Posterior cingulate gyrus (tissue), 11 donors: ENCODE measurements at regions of chr19 and their contacts with region 1.

Region 1: GRCh38 chr19:10835754-10836477 is at the start of gene TMED1:
- DNase-seq: peak; percentile 95 to 100 (median 98)

Region 2: GRCh38 chr19:10870955-10871603 is 35.2 kb after region 1 on chr19 and contains the start of gene CARM1:
- intact Hi-C with region 1: loop called (anchors 2 kb)
- DNase-seq: peak; percentile 95 to 100 (median 99)